ENCODE measurements at regions of chr9 and their contacts with region 1.

Region 1: DNA sequence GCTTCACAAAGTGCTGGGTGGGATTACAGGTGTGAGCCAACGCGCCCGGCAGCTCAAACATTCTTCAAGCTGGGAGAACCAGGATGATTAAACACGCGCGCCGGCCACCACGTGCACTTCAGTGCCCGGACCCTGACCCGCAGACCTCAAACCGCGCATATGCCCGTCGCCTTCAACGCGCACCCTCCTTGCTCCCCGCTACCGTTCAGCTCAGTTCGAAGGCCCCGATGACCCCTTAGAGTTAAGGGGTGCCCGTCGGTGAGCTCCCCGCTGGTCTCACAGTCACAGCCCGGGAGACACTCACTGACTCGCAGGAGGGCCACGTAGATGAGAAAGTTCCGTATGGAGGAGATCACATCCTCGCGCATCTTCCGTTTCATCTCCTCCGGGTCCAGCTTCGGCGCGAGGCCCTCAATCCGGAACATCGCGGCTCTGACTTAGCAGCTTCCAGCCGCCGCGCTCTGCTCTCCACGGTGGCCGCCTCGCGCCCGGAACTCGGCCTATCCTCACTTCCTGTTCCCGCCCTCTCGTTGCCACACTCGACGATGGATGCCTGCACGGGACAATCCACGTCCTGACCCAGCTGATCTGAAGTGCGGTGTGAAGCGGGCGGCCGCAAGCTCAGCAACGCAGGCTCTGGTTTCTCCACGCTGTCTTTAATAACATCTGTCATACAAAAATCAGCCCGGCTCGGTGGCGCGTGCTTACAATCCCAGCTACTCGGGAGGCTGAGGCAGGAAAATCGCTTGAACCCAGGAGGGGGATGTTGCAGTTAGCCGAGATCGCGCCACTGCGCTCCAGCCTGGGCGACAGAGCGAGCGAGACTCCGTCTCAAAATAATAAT is at the start of gene TOMM5:
- DNase-seq: peak; percentile 82
- ATAC-seq: peak; percentile 94
- H3K4me3 Mint-ChIP-seq: peak within 1 kb of the TSS; percentile 99
- H3K27ac Mint-ChIP-seq: peak within 1 kb of the TSS; percentile 96
- H3K4me1 Mint-ChIP-seq: peaks cover 47% of the 10 kb centered on the region
- H3K27me3 Mint-ChIP-seq: peaks cover 5% of the 10 kb centered on the region
- CTCF ChIP-seq: no peak
- total RNA-seq, gene TOMM5: 77.8 and 80.3 TPM in 2 replicates

Region 2: DNA sequence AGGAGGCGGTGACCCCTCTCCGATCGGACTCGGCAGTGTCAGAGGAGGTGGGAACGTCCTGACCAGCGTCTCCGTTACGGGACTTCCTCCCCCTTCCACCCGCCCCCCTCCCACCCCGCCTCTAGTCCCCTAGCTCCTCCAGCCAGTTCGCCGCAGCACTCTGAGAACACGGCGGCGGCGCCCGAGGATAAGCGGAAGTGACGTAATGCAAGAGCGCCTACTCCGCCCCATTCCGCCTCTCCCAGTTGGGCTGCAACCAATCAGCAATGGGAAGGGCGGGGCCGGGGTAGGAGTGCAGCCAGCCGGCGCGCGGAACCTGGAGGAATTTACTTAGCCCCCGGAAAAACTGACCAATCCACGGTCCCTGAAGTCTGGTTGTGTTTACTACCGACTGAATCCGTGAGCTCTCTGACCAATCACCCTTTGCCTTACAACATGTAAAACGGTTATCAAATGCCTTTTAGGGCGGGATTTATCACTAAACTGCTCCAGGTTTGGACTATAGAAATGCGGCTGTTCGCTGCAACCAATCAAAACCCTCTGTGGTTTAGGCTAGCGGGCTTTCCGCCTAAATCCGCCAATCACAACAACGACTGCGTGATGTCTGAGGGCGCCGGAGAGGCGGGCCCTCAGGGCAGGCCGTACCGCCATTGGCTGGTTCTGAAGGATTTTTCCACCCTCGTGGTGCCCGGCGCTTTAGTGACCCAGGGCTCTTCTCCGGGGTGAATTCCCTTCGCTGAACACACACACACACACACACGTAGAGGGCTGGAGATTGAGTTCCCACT is 126.9 kb before region 1 on chr9 and contains the start of gene ZBTB5:
- CTCF ChIA-PET with region 1: no interaction called
- POLR2A ChIA-PET with region 1: interaction called, 22 read pairs
- intact Hi-C with region 1: no loop called
- DNase-seq: peak; percentile 93
- ATAC-seq: peak; percentile 76
- H3K4me3 Mint-ChIP-seq: peak within 1 kb of the TSS; percentile 98
- H3K27ac Mint-ChIP-seq: peak within 1 kb of the TSS; percentile 98
- H3K4me1 Mint-ChIP-seq: peaks cover 36% of the 10 kb centered on the region
- H3K27me3 Mint-ChIP-seq: no peaks in the 10 kb centered on the region
- CTCF ChIP-seq: no peak
- total RNA-seq, gene ZBTB5: 26.5 and 28.1 TPM in 2 replicates

Region 3: GRCh38 chr9:37565661-37566618 is 26.4 kb before region 1 on chr9:
- CTCF ChIA-PET with region 1: interaction called, 6 read pairs
- POLR2A ChIA-PET with region 1: interaction called, 23 read pairs
- intact Hi-C with region 1: no loop called
- DNase-seq: no peak
- ATAC-seq: peak; percentile 87
- H3K4me3 Mint-ChIP-seq: peak overlapping the region; percentile 78
- H3K27ac Mint-ChIP-seq: peak overlapping the region; percentile 92
- H3K4me1 Mint-ChIP-seq: peaks cover 82% of the 10 kb centered on the region
- H3K27me3 Mint-ChIP-seq: no peaks in the 10 kb centered on the region
- CTCF ChIP-seq: no peak

Region 4: GRCh38 chr9:37575921-37576721 is 16.2 kb before region 1 on chr9 and contains the start of gene FBXO10:
- CTCF ChIA-PET with region 1: interaction called, 3 read pairs
- POLR2A ChIA-PET with region 1: interaction called, 27 read pairs
- intact Hi-C with region 1: loop called (anchors 1 kb)
- DNase-seq: peak; percentile 65
- ATAC-seq: peak; percentile 72
- H3K4me3 Mint-ChIP-seq: peak within 1 kb of the TSS; percentile 92
- H3K27ac Mint-ChIP-seq: peak within 1 kb of the TSS; percentile 89
- H3K4me1 Mint-ChIP-seq: peaks cover 47% of the 10 kb centered on the region
- H3K27me3 Mint-ChIP-seq: no peaks in the 10 kb centered on the region
- CTCF ChIP-seq: no peak
- total RNA-seq, gene FBXO10: 29.8 and 39.4 TPM in 2 replicates

Region 5: GRCh38 chr9:37784616-37785483 is 192.5 kb after region 1 on chr9 and contains the start of gene EXOSC3:
- CTCF ChIA-PET with region 1: no interaction called
- POLR2A ChIA-PET with region 1: interaction called, 6 read pairs
- intact Hi-C with region 1: loop called (anchors 10 kb)
- DNase-seq: peak; percentile 83
- ATAC-seq: peak; percentile 87
- H3K4me3 Mint-ChIP-seq: peak within 1 kb of the TSS; percentile 98
- H3K27ac Mint-ChIP-seq: peak within 1 kb of the TSS; percentile 93
- H3K4me1 Mint-ChIP-seq: peaks cover 35% of the 10 kb centered on the region
- H3K27me3 Mint-ChIP-seq: no peaks in the 10 kb centered on the region
- CTCF ChIP-seq: no peak
- total RNA-seq, gene EXOSC3: 63.8 and 69.9 TPM in 2 replicates